ENCODE measurements at regions of chrX and their contacts with region 1.

Region 1: GRCh38 chrX:37926700-37927099 is 79.3 kb upstream of the DYNLT3 start:
- DNase-seq: no peak
- H3K4me3 Mint-ChIP-seq: no peak overlapping the region
- H3K27ac Mint-ChIP-seq: no peak overlapping the region
- H3K4me1 Mint-ChIP-seq: peaks cover 3% of the 10 kb centered on the region
- H3K27me3 Mint-ChIP-seq: peaks cover 5% of the 10 kb centered on the region

Region 2: DNA sequence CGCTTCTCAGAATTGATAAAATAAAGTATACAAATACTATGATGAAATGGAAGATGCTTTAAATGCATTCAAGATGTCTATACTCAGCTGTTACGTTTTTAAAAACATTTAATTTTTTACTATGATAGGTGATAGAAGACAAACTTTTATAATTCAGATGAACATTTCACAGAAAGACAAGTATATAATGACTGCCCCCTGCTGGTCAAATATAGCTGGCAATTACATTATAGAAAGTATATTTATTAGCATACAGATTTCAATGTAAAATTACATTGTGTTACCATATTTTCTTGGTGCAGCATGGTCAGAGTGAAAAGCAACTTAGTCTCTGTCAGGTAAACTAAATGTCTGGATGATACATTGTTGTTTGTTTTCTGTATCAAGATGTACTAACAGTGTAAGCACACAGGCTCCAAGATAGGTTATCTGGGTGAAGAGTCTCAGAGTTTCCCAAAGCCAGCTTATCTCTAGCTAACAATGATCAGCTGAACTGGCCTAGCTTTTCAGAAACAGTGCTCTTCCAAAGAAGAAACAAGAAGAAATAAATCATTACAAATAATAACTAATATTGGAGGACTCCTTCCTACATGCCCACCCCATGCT is 239.9 kb after region 1 on chrX:
- CTCF ChIA-PET with region 1: interaction called, 20 read pairs
- POLR2A ChIA-PET with region 1: no interaction called
- DNase-seq: no peak
- H3K4me3 Mint-ChIP-seq: no peak overlapping the region
- H3K27ac Mint-ChIP-seq: no peak overlapping the region
- H3K4me1 Mint-ChIP-seq: no peaks in the 10 kb centered on the region
- H3K27me3 Mint-ChIP-seq: no peaks in the 10 kb centered on the region

Measured in activated CD4-positive, alpha-beta memory T cell treated with anti-CD3 and anti-CD28 coated beads, Interleukin-2, amount 10 ng/mL, durations not matched to agents 7 days and 5 days (primary cell).